Dorsolateral prefrontal cortex (tissue), 120 donors: ENCODE measurements at regions of chr1 and their contacts with region 1.

Region 1: GRCh38 chr1:40849801-40850592 is 12.2 kb downstream of the CITED4 start:
- DNase-seq: peak; percentile 68 to 84 (median 76)
- H3K4me3 ChIP-seq: no peak overlapping the region
- H3K27ac ChIP-seq: peak overlapping the region in 6 of 59 donors; percentile 5 to 33 (median 12)
- H3K27me3 ChIP-seq: no peaks in the 10 kb centered on the region
- CTCF ChIP-seq: peak; percentile 71 to 99 (median 95)

Region 2: DNA sequence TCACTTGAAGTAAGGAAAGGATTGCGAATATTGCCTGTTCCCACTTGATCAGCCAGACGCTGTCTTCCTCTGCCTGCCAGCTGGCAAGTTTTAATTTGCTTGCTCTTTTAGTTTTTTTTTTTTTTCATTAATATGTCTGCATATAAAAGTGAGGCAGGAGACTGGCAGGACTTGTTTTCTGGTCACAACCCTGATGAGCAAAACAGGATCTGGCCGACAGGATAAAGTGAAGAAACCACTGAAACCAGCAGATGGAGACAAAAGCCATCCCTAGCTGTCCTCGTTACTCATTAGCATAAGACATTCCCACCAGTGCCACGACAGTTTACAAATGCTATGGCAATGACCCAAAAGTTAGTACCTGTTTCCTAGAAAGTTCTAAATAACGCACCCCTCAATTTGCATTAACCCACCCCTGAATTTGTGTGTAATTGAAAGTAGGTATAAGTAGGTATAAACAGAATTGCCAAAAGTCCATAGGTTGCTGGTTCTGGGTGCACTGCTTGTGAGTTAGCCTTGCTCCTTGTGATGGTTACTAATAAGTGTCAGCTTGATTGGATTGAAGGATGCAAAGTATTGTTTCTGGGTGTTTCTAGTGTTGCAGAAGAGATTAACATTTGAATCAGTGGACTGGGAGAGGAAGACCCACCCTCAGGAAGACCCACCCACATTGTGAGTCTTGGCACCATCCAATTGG is 257.7 kb before region 1 on chr1:
- intact Hi-C with region 1: loop called (anchors 5 to 10 kb)
- DNase-seq: peak in 4 of 10 donors; percentile 6 to 52 (median 22)
- H3K4me3 ChIP-seq: no peak overlapping the region
- H3K27ac ChIP-seq: no peak overlapping the region
- H3K27me3 ChIP-seq: no peaks in the 10 kb centered on the region
- CTCF ChIP-seq: peak; percentile 25 to 73 (median 60)

Region 3: DNA sequence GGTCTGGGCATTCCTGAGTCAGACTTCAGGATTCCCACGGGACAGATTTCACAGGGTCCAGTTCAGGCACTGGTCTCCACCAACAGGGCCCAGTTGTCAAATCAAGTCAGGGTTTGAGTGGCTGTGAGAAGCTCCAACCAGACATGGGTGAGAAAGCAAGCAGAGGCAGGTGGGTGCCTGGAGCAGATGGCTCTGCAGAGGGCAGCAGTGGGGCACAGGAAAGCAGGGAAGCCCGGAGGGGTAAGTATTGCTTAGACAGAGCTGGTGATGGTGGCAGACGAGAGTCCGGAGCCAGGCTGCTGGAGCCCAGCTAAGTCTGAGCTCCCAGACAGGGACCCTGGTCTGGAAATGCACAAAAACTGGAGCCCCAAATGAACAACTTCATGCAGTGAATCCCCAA is 224.9 kb before region 1 on chr1:
- intact Hi-C with region 1: loop called in 1 of 2 experiments (anchors 10 kb)
- DNase-seq: peak in 6 of 10 donors; percentile 36 to 63 (median 55)
- H3K4me3 ChIP-seq: no peak overlapping the region
- H3K27ac ChIP-seq: peak overlapping the region in 37 of 59 donors; percentile 0 to 85 (median 51)
- H3K27me3 ChIP-seq: no peaks in the 10 kb centered on the region
- CTCF ChIP-seq: peak in 36 of 56 donors; percentile 9 to 43 (median 29)

Region 4: DNA sequence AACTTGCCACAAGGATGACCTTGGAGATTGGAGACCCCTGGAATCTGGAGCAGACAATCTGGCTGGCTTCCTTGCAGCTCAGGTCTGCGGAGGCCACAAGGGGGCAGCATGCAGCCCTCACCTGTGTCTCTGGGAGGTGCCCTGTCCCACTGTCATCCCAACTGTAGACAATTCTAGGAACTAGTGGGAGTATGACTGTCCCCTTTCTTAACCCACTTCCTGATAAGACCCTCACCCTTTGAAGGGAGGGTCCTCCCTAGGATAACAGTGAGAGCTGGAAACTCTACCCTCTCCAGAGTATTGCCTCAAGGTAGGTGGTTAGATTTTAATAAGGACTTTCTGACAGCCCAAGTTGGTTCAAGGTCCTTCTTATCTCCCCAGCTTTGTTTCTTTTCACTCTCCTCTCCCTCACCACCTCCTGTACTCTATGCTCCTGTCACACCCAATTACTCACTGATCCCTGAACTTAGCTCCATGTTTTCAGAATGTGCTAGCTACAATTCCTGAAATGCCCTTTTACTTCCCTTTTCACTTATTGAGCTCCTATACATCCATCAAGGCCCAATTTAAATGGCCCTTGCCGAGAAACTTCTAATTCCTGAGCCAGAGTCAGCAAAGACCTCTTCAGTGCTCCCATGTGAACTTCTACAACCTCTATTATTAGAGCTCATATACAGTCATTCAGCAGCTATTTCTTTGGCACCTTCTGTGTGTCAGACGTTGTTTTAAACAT is 75.6 kb before region 1 on chr1:
- intact Hi-C with region 1: loop called (anchors 5 kb)
- DNase-seq: peak in 4 of 10 donors; percentile 38 to 51 (median 45)
- H3K4me3 ChIP-seq: no peak overlapping the region
- H3K27ac ChIP-seq: no peak overlapping the region
- H3K27me3 ChIP-seq: no peaks in the 10 kb centered on the region
- CTCF ChIP-seq: peak; percentile 39 to 83 (median 72)

Region 5: DNA sequence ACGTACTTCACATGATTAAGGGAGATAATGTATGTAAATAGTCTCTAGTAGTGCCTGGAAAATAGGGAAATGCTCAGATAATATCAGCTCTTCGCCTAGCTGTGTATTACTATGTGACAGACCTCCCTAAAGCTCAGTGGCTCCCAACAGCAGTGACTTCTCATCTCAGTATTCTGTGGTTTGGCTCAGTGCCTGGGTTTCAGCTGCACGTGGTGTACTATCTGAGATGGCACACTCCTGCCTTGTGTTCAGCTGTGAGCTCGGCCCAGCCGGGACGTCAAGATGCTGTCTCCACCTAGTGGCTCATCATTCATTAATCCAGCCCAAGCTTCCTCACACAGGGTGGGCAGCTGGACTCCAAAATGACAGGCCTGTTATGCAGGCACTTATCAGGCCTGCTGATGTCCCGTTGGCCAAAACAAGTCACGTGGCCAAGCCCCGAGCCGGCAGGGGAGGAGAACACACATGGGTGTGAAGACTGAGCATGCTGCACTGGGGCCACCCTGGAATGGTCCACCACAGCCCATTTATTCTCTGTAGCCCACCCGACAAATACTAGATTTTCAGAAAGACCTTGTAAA is 153.7 kb after region 1 on chr1:
- intact Hi-C with region 1: loop called in 1 of 2 experiments (anchors 5 kb)
- DNase-seq: peak; percentile 83 to 99 (median 94)
- H3K4me3 ChIP-seq: peak overlapping the region in 3 of 59 donors; percentile 15 to 26 (median 25)
- H3K27ac ChIP-seq: peak overlapping the region in 58 of 59 donors; percentile 11 to 88 (median 72)
- H3K27me3 ChIP-seq: no peaks in the 10 kb centered on the region
- CTCF ChIP-seq: peak; percentile 46 to 83 (median 70)